ENCODE measurements at regions of chr11 and their contacts with region 1.

Region 1: DNA sequence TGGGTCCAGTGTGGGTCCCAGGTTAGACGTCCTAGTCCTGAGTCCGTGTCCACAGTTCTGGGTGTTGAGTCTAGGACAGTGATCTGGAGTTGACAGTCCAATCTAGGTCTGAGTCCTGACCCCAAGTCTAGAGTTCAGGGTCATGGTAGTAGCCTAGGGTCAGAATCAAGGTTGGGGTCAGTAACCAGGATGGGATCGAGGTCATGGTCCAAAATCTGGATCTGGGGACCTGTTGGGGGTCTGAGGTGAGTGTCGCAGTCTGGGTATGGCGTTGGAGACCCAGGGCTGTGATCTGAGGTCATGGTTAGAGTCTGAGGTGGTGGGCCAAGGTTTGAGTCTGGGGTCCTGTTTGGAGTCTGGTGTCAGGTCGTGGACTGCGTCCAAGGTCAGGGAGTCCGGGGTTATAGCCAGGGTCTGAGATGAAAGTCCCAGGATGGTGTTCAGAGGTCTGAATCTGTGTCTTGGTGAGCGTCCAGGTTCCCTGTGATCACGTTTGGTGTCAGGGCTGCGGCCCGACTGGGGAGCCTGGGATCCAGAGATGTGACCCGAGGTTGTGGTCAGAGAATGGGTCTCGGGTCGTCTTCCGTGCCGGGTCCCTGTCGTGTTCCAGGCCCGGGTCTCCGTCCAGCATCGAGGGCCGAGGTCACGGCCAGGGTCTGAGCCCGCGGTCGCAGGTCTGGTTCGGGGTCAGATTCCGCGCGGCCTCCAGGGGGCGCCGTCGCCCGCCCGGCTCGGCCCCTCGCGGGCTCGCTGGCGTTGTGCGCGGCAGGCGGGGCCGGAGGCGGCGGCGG is 445 bp upstream of the GRK2 start:
- DNase-seq: peak; percentile 65 to 91 (median 82)
- H3K4me3 ChIP-seq: peak overlapping the region in 2 of 3 donors; percentile 21 to 46
- H3K27ac ChIP-seq: peak overlapping the region; percentile 66 to 80
- H3K4me1 ChIP-seq: peaks cover 2 to 53% (median 25%) of the 10 kb centered on the region in 3 donors
- H3K27me3 ChIP-seq: no peaks in the 10 kb centered on the region
- CTCF ChIP-seq: peak; percentile 94

Region 2: DNA sequence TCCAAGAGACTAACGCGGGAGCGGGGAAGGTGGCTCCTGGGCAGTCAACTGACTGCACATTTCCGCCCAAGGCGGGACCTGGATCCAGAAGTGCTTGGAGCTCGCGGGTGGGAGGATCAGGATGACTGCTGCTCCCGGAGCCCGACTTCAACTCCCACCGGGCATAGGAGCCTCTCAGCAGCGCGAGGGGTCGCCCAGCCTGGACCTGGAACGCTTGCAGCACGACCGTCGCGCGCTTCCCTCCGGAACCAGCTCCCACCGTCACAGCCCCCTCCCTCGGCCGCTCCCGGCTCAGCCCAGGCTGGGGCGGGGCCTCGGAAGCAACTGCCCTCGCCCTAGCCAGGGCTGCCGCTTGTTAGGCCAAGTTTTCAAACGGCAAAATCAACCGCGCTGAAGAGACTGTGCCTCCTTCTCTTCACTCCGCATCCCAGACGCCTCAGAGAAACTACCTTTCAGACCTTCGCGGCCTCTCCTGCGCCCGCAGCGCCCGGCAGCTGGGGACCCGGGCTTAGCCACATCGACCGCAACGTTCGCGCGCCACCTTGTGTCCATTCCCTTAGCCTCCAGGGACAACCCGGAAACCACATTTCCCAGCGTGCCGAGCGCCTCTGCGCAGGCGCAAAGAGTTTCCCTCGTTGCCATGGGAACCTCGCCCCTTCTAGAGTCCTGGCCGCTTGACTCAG is 51.5 kb after region 1 on chr11:
- intact Hi-C with region 1: loop called (anchors 5 kb)
- DNase-seq: peak; percentile 98 to 99 (median 98)
- H3K4me3 ChIP-seq: peak overlapping the region; percentile 85 to 91 (median 90)
- H3K27ac ChIP-seq: peak overlapping the region; percentile 91 to 96
- H3K4me1 ChIP-seq: peaks cover 0 to 6% (median 0%) of the 10 kb centered on the region in 3 donors
- H3K27me3 ChIP-seq: no peaks in the 10 kb centered on the region
- CTCF ChIP-seq: peak; percentile 95

Measured in kidney (tissue), 22 donors.